ENCODE measurements at regions of chr4 and their contacts with region 1.

Region 1: GRCh38 chr4:82462415-82462831 is 32.0 kb downstream of the ENOPH1 start:
- DNase-seq: peak; percentile 95
- H3K4me3 ChIP-seq: no peak overlapping the region
- H3K27ac ChIP-seq: peak overlapping the region in 1 of 4 donors; percentile 26
- H3K4me1 ChIP-seq: peaks cover 0 to 11% (median 3%) of the 10 kb centered on the region in 4 donors
- H3K27me3 ChIP-seq: no peaks in the 10 kb centered on the region
- CTCF ChIP-seq: peak in 3 of 4 experiments; percentile 41 to 89 (median 43)
- EP300 ChIP-seq: no peak
- POLR2A ChIP-seq: no peak

Region 2: DNA sequence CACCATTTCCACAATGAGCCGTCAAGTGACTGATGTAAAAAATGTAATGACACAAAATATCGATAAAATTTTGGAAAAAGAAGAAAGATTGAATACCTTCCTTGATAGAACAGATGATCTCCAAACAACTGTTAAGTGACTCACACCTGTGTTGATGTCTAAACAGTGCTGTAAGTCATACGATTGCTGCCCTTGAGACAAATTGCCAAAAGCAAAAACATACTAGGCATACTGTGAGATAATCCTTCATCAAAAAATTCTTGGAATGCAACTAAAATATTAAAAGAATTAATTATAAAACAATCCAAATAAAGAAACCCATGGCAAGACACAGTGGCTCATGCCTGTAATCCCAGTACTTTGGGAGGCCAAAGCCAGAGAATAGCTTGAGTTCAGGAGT is 142.1 kb before region 1 on chr4:
- intact Hi-C with region 1: no loop called
- DNase-seq: no peak
- H3K4me3 ChIP-seq: no peak overlapping the region
- H3K27ac ChIP-seq: no peak overlapping the region
- H3K4me1 ChIP-seq: no peaks in the 10 kb centered on the region
- H3K27me3 ChIP-seq: no peaks in the 10 kb centered on the region
- CTCF ChIP-seq: no peak
- EP300 ChIP-seq: no peak
- POLR2A ChIP-seq: no peak

Region 3: DNA sequence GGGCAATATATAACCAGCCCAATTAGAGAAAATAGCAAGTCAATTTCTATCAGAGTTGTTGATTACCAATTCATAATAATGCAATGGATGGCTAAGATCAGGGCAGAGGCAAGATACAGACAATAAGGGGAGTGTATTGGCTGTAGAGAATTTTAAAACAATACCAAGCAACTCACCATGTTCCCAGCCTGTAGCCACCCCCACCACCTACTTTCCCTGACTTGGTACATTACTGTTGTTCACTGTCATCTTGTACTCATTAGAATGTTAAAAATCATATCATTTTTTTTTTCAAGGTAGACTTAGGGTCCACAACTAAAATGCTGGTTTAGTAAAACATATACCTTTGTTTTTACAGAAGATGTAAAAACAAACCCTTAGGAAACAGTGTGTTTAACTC is 116.3 kb before region 1 on chr4:
- intact Hi-C with region 1: no loop called
- DNase-seq: no peak
- H3K4me3 ChIP-seq: no peak overlapping the region
- H3K27ac ChIP-seq: no peak overlapping the region
- H3K4me1 ChIP-seq: peaks cover 0 to 24% (median 6%) of the 10 kb centered on the region in 4 donors
- H3K27me3 ChIP-seq: no peaks in the 10 kb centered on the region
- CTCF ChIP-seq: no peak
- EP300 ChIP-seq: no peak
- POLR2A ChIP-seq: no peak

Region 4: DNA sequence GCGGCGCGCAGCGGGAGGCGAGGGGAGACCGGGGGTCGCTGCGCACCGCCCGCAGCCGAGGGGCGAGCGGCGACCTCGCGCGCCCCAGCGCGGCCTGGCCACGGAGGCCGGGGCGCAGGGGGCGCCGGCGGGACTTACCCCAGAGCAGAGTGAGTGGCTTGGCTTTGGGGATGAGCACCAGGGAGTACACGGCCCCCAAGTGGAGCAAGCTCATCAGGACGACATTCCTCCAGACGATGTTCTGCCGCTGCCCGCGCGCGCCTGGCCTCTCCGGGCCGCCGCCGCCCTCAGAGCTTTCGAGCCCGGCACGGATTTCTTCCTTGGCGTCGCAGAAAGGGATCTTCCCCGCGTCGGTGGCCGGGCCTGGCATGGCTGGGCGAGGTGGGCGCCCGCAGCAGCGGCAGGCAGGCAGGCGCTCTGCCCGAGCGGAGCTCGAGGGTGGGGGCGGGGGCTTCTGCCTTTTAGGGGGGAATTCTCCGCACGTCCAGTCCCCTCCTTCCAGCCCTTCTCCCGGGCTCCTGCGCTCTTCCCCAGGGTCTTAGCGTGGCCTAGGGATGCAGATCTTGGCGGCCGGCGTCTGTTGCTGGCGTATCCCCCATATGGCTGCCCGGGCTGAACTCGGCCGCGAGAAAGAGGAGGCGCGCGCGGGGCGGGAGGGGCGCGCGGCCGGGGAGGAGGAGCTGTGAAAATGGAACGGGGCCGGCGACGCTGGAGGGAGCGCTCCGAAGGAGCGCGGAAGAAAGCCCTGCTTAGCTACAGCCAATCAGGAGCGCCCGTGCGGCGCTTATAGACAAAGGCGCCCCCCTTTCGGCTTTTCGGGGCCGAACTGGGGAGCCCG is 336.0 kb after region 1 on chr4 and contains the start of gene SCD5:
- intact Hi-C with region 1: loop called (anchors 1 kb)
- DNase-seq: peak; percentile 91
- H3K4me3 ChIP-seq: peak within 1 kb of the TSS; percentile 78 to 93 (median 84)
- H3K27ac ChIP-seq: peak within 1 kb of the TSS; percentile 81 to 86 (median 82)
- H3K4me1 ChIP-seq: peaks cover 0 to 22% (median 16%) of the 10 kb centered on the region in 4 donors
- H3K27me3 ChIP-seq: no peaks in the 10 kb centered on the region
- CTCF ChIP-seq: no peak
- EP300 ChIP-seq: no peak
- POLR2A ChIP-seq: no peak
- total RNA-seq, gene SCD5: 27.3 to 30.7 (median 29.0) TPM

Region 5: DNA sequence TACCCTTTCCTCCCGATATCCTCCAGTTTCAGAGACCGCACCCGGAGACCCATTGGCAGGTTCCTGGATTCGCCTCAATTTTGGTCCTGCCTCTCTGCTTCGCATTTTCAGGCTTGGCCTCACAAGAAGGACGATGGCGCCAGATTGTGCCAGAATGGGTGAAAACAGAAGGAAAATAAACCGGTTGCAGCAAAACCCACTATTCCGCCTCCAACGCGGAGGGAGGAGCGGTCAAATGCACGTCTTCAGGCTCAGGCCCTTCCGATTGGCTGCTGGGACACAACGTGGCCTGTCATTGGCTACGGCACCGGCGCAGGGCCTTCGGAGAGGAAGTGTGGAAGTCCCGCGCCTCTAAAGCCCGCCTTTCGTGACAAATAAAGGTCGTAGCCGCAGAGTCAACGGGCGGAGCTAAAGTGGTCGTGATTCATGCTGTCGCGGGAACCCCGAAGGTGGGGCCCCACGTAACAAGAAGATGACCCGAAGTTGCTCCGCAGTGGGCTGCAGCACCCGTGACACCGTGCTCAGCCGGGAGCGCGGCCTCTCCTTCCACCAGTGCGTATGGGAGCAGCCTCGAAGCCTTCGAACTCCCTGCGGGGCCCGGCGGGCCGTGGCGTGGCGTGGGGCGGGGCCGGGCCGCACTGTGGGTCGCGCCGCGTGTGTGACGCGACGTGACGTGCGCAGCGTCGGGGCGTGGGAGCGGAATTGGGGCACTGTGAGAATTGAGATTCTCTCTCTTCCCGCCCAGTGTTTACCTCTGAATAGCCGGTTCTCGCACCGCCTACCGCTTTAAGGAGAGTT is 438.1 kb after region 1 on chr4 and contains the start of gene THAP9:
- intact Hi-C with region 1: loop called (anchors 2 kb)
- DNase-seq: peak; percentile 100
- H3K4me3 ChIP-seq: peak within 1 kb of the TSS; percentile 54 to 82 (median 74)
- H3K27ac ChIP-seq: peak within 1 kb of the TSS; percentile 94 to 98 (median 98)
- H3K4me1 ChIP-seq: peaks cover 0 to 37% (median 34%) of the 10 kb centered on the region in 4 donors
- H3K27me3 ChIP-seq: no peaks in the 10 kb centered on the region
- CTCF ChIP-seq: no peak
- EP300 ChIP-seq: peak in 2 of 4 donors; percentile 5 to 13
- POLR2A ChIP-seq: peak; percentile 86 to 88
- total RNA-seq, gene THAP9: 3.9 to 7.5 (median 5.3) TPM

Region 6: DNA sequence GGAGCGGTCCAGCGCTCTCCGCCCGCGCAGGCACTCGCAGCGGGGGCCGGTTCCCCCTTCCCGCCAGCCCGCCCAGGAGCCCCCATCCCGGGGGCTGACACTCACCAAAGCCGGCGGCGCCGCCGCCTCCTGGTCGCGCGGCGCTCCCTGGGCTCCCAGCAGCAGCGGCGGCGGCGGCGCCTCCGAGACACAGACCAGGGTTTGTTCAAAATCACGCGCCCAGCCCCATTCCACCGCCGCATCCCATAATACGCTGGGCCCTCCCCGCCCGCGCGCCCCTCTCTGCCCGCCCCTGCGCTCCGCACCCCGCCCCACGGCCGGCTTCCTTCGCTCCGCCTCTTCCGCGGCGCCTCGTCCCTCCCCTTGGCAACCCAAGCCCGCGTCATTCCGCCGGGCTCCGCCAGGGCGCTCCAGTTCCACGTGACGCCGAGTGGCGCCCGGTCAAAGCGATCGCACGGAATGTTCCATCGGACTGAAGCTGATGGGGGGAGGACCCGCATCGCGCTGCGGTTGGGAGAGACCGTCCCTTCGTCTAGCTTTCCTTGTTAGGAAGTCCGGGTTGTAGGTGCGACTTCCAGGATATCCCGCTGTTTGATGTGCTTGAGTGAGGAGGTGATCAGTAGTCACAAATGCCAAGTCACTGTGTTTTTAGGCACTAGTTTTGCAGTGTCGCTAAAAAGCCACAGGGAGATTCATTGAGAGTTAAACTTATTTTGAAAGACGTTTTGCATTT is 550.4 kb after region 1 on chr4:
- intact Hi-C with region 1: loop called (anchors 2 kb)
- DNase-seq: peak; percentile 99
- H3K4me3 ChIP-seq: peak overlapping the region; percentile 45 to 87 (median 68)
- H3K27ac ChIP-seq: peak overlapping the region; percentile 88 to 97 (median 89)
- H3K4me1 ChIP-seq: peaks cover 0 to 37% (median 33%) of the 10 kb centered on the region in 4 donors
- H3K27me3 ChIP-seq: no peaks in the 10 kb centered on the region
- CTCF ChIP-seq: peak in 3 of 4 experiments; percentile 47 to 62 (median 59)
- EP300 ChIP-seq: peak in 1 of 4 donors; percentile 69
- POLR2A ChIP-seq: peak; percentile 28 to 46

Region 7: DNA sequence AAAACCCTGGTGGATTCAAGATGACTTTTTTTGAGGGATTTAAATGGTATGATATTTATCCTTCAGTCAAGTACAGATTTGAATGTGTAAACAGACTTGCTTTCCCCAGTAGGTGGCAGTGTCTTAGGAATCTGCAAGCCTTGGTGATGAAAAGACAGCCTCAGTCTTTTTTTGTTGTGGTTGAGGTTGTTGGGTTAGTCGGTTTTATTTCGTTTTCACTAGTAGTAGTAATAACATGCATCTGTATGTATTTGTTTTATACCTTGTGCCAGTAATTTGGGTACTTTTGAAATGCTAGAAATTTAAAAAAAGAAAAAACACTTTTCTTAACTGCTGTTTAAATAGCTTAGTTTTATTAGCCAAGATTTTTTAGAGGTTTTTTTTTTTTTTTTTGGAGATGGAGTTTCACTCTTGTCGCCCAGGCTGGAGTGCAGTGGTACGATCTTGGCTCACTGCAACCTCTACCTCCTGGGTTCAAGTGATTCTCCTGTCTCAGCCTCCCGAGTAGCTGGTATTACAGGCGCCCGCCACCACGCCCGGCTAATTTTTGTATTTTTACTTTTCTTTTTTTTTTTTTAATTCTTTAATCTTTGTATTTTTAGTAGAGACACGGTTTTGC is 611.8 kb after region 1 on chr4:
- intact Hi-C with region 1: loop called (anchors 10 kb)
- DNase-seq: no peak
- H3K4me3 ChIP-seq: no peak overlapping the region
- H3K27ac ChIP-seq: peak overlapping the region in 3 of 4 donors; percentile 58 to 79 (median 66)
- H3K4me1 ChIP-seq: peaks cover 0 to 30% (median 25%) of the 10 kb centered on the region in 4 donors
- H3K27me3 ChIP-seq: no peaks in the 10 kb centered on the region
- CTCF ChIP-seq: peak in 3 of 4 experiments; percentile 46 to 58 (median 52)
- EP300 ChIP-seq: no peak
- POLR2A ChIP-seq: no peak

Region 8: GRCh38 chr4:83259586-83259985 is 797.2 kb after region 1 on chr4:
- intact Hi-C with region 1: loop called (anchors 2 kb)
- DNase-seq: no peak
- H3K4me3 ChIP-seq: no peak overlapping the region
- H3K27ac ChIP-seq: no peak overlapping the region
- H3K4me1 ChIP-seq: peaks cover 0 to 30% (median 21%) of the 10 kb centered on the region in 4 donors
- H3K27me3 ChIP-seq: no peaks in the 10 kb centered on the region
- CTCF ChIP-seq: no peak
- EP300 ChIP-seq: no peak
- POLR2A ChIP-seq: no peak

Region 9: DNA sequence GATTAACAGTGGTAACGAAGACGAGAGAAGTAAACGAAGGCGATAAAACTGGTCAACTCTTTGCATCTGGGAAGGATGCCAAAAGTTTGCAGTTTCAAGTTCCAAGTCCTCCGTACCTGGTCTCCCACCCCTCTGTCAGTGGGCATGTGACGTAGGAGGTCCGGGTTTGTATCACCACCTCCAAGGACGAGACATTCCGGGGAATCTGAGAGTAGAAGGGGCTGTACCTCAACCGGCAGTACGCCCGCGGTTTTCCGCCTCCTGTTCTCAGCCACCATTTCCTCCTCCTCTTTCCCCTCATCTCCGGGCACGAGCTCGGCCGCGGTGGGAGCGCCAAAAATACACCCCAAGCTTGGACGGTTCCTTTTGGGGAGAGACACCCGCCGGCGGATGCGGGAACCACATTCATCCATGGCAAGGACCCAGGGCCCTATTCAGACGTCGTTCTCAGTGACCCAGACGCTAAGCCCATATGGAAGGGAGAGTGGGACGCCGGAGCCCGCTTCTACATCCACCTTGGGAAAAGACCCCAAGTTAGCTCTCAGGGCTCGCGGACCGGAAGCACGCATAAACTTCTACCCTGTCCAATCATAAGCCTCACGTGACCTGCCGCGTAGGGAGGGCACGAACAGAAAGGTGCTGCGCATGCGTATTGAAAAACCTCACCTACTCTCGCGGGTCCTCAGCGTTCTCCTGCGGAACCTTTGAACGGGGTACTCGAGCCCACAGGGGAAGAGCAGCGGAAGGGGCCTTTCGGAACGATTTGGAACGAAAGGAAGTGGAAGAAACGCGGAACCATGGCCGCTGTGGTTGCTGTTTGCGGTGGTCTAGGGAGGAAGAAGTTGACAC is 993.1 kb after region 1 on chr4 and contains the starts of genes HELQ and MRPS18C:
- intact Hi-C with region 1: loop called (anchors 10 kb)
- DNase-seq: peak; percentile 99
- H3K4me3 ChIP-seq: peak within 1 kb of the TSS; percentile 80 to 86 (median 84)
- H3K27ac ChIP-seq: peak within 1 kb of the TSS; percentile 96 to 99 (median 98)
- H3K4me1 ChIP-seq: peaks cover 0 to 32% (median 22%) of the 10 kb centered on the region in 4 donors
- H3K27me3 ChIP-seq: no peaks in the 10 kb centered on the region
- CTCF ChIP-seq: peak in 2 of 4 experiments; percentile 13 to 48
- EP300 ChIP-seq: peak in 1 of 4 donors; percentile 20
- POLR2A ChIP-seq: peak; percentile 45 to 66
- total RNA-seq, gene HELQ: 11.8 to 21.8 (median 18.9) TPM
- total RNA-seq, gene MRPS18C: 8.3 to 36.2 (median 17.4) TPM

Measured in sigmoid colon (tissue), 7 donors.